Activated CD4-positive, alpha-beta T cell treated with anti-CD3 and anti-CD28 coated beads for 36 hours (primary cell): ENCODE measurements at regions of chr18 and their contacts with region 1.

Region 1: DNA sequence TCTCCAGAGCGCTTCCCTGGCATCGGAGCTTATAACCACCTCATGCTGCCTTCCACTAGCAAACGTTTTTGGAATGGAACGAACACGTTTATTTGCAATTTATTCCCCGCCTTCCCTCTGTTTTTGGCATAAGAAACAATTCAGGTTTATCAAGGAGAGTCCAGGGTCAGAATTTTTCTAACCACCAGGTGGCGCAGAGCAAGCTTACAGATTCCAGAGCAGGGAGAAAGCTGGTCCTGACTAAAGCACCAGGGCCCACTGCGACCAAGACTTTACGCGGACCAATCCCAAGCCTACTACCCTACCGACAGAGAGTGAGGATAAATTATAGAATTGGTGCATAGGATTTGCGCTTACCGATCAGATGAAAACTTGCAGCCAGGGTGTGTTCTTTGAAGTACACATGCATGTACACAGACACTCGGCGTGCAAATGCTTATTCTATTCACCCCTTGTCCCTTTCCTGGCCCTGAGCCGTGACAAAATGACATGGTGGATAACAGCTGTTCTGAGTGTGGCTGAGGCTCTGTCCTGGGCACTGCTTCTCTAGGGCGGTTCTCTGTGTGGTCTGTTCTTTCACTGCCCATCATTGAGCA is 34.7 kb downstream of the NAPG start:
- DNase-seq: peak; percentile 79
- ATAC-seq: peak; percentile 67
- H3K4me3 Mint-ChIP-seq: no peak overlapping the region
- H3K27ac Mint-ChIP-seq: no peak overlapping the region
- H3K4me1 Mint-ChIP-seq: peaks cover 7% of the 10 kb centered on the region
- H3K27me3 Mint-ChIP-seq: no peaks in the 10 kb centered on the region

Region 2: DNA sequence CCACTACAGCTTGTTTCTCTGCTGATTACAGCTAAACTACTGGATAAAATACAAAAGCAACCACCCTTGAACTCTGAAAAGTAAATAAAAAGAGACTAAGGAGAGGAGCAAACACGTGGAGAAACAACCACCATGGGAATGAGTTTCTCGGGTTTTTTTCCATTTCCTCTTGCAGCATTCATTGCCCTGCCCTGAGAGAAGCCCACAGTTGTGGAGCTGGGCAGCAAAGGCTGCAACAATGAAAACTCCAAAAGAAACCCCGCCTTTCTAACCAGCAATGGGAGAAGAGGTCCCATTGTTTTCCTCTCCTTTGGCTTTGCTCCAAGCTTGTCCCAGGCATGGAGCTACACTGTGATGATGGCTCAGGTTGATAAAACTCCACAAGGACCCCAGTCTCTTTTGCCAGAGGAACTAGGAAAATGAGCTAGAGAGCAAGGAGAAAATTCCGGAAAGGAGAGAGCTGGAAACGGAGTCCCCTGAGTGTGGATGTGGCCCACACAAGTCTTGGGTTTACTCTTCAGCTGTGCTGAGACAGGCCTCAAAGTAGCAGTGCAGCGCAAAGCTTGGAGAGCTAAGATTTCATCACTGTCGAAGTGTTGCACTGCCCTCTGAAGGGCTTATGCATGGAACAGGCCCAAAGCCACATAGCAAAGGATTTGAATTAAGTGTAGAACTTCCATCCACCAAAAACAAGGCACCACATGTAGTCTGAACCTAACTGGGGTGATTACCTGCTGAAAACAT is 13.8 kb before region 1 on chr18:
- CTCF ChIA-PET with region 1: interaction called, 16 read pairs
- POLR2A ChIA-PET with region 1: no interaction called
- intact Hi-C with region 1: no loop called
- DNase-seq: no peak
- ATAC-seq: no peak
- H3K4me3 Mint-ChIP-seq: no peak overlapping the region
- H3K27ac Mint-ChIP-seq: no peak overlapping the region
- H3K4me1 Mint-ChIP-seq: no peaks in the 10 kb centered on the region
- H3K27me3 Mint-ChIP-seq: no peaks in the 10 kb centered on the region

Region 3: GRCh38 chr18:10588975-10589374 is 28.4 kb after region 1 on chr18:
- CTCF ChIA-PET with region 1: no interaction called
- POLR2A ChIA-PET with region 1: no interaction called
- intact Hi-C with region 1: no loop called
- DNase-seq: no peak
- ATAC-seq: no peak
- H3K4me3 Mint-ChIP-seq: no peak overlapping the region
- H3K27ac Mint-ChIP-seq: no peak overlapping the region
- H3K4me1 Mint-ChIP-seq: no peaks in the 10 kb centered on the region
- H3K27me3 Mint-ChIP-seq: no peaks in the 10 kb centered on the region

Region 4: DNA sequence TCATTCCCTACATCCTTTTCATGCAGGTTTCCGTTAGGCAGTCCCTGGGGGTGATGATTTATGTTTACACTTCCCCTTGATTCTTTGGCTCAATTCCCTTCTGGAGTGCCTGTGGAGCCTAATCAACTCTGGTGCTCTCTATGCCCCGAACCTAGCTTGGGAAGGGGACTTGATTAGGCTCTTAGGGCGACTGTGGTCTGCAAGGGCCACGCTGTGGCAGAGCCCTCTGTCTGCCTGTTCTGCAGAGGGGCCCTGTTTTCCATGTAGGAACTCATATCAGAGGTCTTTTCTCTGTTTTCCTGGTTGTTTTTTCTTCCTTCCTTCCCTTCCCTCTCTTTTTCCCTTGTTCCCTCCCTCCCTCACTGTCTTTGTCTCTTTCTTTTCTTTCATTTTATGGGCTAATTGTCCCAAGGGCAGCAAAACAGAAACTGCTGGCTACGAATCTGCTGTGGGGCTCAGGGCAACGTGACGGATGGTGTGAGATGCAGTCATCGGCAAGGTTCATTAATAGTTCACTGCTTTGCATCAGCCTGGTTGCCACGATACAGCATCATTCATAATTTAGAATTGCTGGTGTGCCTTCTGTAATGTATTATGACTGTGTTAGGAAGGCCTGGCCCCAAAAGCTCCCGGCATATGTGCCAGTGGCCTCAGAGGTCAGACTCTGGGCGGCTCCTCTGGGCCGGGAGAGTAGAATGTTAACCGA is 99.8 kb after region 1 on chr18:
- CTCF ChIA-PET with region 1: no interaction called
- POLR2A ChIA-PET with region 1: no interaction called
- intact Hi-C with region 1: loop called in 1 of 2 experiments (anchors 10 kb)
- DNase-seq: no peak
- ATAC-seq: no peak
- H3K4me3 Mint-ChIP-seq: no peak overlapping the region
- H3K27ac Mint-ChIP-seq: no peak overlapping the region
- H3K4me1 Mint-ChIP-seq: no peaks in the 10 kb centered on the region
- H3K27me3 Mint-ChIP-seq: peaks cover 2% of the 10 kb centered on the region

Region 5: DNA sequence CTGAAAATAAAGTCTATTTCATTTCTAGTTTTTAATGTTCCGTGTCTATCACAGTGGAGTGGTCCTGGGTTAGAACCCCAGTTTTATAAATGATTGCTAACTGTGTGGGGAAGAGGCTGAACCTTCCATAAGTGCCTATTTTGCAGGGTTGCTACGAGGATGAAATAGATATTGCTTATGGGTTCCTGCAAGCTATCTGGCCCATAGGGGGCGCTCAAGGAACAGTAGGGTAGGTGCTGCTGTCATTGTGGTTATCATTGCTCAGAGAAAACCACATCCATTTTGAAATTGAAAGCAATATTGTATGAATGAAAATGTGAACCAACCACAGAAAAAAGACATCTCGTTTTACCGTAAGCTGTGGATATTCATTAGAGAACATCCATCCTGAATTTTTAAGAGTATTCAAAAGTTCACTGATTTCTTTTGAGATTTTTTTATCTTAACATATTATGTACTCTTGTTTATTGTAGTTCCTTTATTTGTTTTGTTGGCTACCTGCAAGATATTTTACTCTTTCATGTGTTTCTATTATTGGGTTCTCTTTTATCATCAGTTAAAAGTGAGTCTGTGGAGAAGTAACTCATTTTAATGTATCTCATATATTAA is 226.8 kb after region 1 on chr18:
- CTCF ChIA-PET with region 1: no interaction called
- POLR2A ChIA-PET with region 1: no interaction called
- intact Hi-C with region 1: loop called in 1 of 2 experiments (anchors 2 kb)
- DNase-seq: peak; percentile 95
- ATAC-seq: peak; percentile 89
- H3K4me3 Mint-ChIP-seq: no peak overlapping the region
- H3K27ac Mint-ChIP-seq: no peak overlapping the region
- H3K4me1 Mint-ChIP-seq: peaks cover 4% of the 10 kb centered on the region
- H3K27me3 Mint-ChIP-seq: peaks cover 39% of the 10 kb centered on the region

Region 6: DNA sequence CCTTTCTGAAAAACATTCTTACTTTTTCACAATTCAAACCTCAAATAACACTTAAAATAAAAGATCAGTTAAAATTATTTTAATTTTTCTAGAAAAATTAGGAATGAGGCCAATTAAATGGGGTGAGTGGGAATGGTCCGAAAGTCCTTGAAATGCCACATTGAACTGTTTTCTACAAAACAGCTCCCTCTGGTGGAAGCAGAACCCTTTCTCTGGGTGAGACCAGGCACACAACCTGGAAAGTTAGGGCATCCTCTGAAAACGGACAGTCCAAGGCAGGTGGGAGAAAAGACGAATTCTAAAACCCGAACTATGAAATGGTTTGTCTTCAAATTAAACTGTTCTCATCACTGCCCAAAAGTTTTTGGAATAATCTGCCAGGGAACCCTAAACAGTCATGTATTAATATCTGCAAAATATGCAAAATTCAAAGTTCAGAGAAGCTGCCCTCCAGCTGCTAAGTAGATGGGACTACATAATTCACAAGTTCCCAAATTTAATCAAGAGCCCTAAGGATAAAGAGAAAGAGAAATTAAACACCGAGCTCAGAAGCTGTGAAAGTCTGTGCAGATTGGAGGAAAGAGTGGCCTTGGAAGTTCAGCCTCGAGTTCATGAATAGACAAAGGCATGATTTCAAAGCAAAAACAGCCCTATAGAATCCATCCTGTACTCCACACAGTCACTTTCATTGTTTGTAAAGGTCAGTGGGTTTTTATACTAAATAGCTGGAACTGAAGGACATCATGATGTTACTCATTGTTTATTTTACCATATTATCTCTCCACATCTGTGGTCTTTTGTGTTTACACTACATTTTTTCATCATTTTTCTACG is 480.5 kb after region 1 on chr18:
- CTCF ChIA-PET with region 1: no interaction called
- POLR2A ChIA-PET with region 1: no interaction called
- intact Hi-C with region 1: loop called in 1 of 2 experiments (anchors 10 kb)
- DNase-seq: peak; percentile 36
- ATAC-seq: no peak
- H3K4me3 Mint-ChIP-seq: no peak overlapping the region
- H3K27ac Mint-ChIP-seq: no peak overlapping the region
- H3K4me1 Mint-ChIP-seq: no peaks in the 10 kb centered on the region
- H3K27me3 Mint-ChIP-seq: peaks cover 5% of the 10 kb centered on the region

Region 7: DNA sequence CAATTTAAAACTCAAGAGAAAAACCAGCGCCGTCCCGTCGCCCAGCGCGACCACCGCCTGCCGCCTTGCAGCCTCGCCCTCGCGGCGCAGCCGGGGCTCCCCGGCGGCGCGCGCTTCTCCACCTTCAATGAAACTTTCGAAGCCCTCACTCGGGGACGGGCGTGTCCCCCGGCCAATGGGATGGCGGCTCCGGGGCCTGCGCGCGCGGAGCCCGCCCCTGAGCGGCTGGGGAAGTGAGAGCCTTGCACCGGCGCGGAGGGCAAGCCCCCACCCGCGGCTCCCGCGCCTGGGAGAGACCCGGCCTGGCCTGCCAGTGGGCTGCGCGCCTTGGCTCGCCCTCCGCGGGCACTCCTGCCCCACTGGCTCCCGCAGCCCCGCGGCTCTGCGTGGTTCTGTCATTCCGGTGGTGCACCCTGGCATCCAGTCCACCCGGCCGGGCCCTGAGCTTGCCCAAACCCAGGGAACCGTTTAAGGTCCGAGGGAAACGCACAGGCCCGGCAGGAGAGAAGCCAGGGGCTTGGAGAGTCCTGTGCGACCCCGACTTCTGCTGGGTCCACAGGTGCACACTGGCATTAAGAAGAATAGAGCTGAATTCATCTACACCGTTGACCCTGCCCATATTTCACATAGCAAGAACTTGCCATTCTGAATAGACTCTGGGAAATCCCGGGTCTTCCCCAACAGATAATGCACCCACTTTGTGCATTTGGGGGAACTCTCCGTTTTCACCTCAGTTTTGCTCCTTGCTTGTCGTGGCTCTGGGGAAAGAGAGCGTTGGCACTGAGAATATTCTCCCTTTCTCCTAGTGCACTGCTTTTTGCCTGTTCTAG is 589.1 kb after region 1 on chr18 and contains the start of gene PIEZO2:
- CTCF ChIA-PET with region 1: interaction called, 6 read pairs
- POLR2A ChIA-PET with region 1: no interaction called
- intact Hi-C with region 1: loop called in 1 of 2 experiments (anchors 1 kb)
- DNase-seq: peak; percentile 44
- ATAC-seq: peak; percentile 42
- H3K4me3 Mint-ChIP-seq: no peak within 1 kb of the TSS
- H3K27ac Mint-ChIP-seq: no peak within 1 kb of the TSS
- H3K4me1 Mint-ChIP-seq: peaks cover 5% of the 10 kb centered on the region
- H3K27me3 Mint-ChIP-seq: peaks cover 34% of the 10 kb centered on the region
- total RNA-seq, gene PIEZO2: not detected

Region 8: GRCh38 chr18:11553098-11553940 is 992.8 kb after region 1 on chr18:
- CTCF ChIA-PET with region 1: interaction called, 6 read pairs
- POLR2A ChIA-PET with region 1: no interaction called
- intact Hi-C with region 1: loop called in 1 of 2 experiments (anchors 2 kb)
- DNase-seq: peak; percentile 51
- ATAC-seq: peak; percentile 61
- H3K4me3 Mint-ChIP-seq: no peak overlapping the region
- H3K27ac Mint-ChIP-seq: no peak overlapping the region
- H3K4me1 Mint-ChIP-seq: no peaks in the 10 kb centered on the region
- H3K27me3 Mint-ChIP-seq: peaks cover 2% of the 10 kb centered on the region